ENCODE measurements at regions of chr19 and their contacts with region 1.

Region 1: DNA sequence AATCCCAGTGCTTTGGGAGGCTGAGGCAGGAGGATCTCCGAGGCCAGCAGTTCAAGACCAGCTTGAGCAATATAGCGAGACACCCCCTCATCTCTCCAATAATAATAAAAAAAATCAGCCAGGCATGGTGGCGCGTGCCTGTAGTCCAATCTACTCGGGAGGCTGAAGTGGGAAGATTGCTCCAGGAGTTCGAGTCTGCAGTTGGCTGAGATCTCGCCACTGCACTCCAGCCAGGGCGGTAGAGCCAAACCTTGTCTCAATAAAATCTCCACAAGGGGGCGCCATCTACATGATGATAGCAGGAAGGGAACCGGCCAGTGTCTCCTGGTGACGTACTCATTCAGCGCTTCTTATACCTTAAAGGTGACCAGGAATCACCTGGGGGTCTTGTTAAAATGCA is 13.6 kb upstream of the C5AR1 start:
- DNase-seq: no peak
- ATAC-seq: peak; percentile 97
- H3K4me3 ChIP-seq: no peak overlapping the region
- H3K27ac ChIP-seq: no peak overlapping the region
- H3K4me1 ChIP-seq: no peaks in the 10 kb centered on the region
- H3K27me3 ChIP-seq: no peaks in the 10 kb centered on the region
- CTCF ChIP-seq: peak; percentile 79

Region 2: GRCh38 chr19:47057328-47057727 is 238.7 kb before region 1 on chr19:
- intact Hi-C with region 1: no loop called
- DNase-seq: no peak
- ATAC-seq: no peak
- H3K4me3 ChIP-seq: no peak overlapping the region
- H3K27ac ChIP-seq: no peak overlapping the region
- H3K4me1 ChIP-seq: no peaks in the 10 kb centered on the region
- H3K27me3 ChIP-seq: no peaks in the 10 kb centered on the region
- CTCF ChIP-seq: no peak

Region 3: DNA sequence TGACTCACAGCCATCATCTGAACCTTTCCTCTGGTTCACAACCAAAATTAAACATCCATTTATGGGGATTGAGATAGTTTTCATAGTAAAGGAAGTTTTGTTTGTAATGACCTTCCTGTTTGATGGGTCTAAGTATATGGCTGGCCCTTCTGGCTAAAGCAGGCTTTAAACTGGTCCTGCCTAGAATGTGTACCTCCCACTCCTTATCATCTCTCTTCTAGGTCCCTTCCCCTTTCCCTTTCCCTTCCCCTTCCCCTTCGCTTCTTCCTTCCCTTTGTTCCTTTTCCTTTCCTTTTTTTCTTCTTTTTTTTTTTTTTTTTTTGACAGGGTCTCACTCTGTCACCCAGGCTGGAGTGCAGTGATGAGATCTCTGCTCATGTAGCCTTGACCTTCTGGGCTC is 100.6 kb before region 1 on chr19:
- intact Hi-C with region 1: no loop called
- DNase-seq: no peak
- ATAC-seq: no peak
- H3K4me3 ChIP-seq: no peak overlapping the region
- H3K27ac ChIP-seq: no peak overlapping the region
- H3K4me1 ChIP-seq: peaks cover 11% of the 10 kb centered on the region
- H3K27me3 ChIP-seq: no peaks in the 10 kb centered on the region
- CTCF ChIP-seq: no peak

Region 4: GRCh38 chr19:47256688-47257443 is 39.2 kb before region 1 on chr19:
- intact Hi-C with region 1: no loop called
- DNase-seq: peak; percentile 100
- ATAC-seq: peak; percentile 87
- H3K4me3 ChIP-seq: peak overlapping the region; percentile 51
- H3K27ac ChIP-seq: peak overlapping the region; percentile 87
- H3K4me1 ChIP-seq: peaks cover 19% of the 10 kb centered on the region
- H3K27me3 ChIP-seq: no peaks in the 10 kb centered on the region
- CTCF ChIP-seq: no peak

Region 5: GRCh38 chr19:47348819-47349795 is 53.1 kb after region 1 on chr19 and contains the start of gene DHX34:
- intact Hi-C with region 1: loop called (anchors 2 kb)
- DNase-seq: peak; percentile 99
- ATAC-seq: peak; percentile 100
- H3K4me3 ChIP-seq: peak within 1 kb of the TSS; percentile 99
- H3K27ac ChIP-seq: peak within 1 kb of the TSS; percentile 78
- H3K4me1 ChIP-seq: peaks cover 10% of the 10 kb centered on the region
- H3K27me3 ChIP-seq: no peaks in the 10 kb centered on the region
- CTCF ChIP-seq: peak; percentile 98
- total RNA-seq, gene DHX34: 15.8 TPM

Region 6: DNA sequence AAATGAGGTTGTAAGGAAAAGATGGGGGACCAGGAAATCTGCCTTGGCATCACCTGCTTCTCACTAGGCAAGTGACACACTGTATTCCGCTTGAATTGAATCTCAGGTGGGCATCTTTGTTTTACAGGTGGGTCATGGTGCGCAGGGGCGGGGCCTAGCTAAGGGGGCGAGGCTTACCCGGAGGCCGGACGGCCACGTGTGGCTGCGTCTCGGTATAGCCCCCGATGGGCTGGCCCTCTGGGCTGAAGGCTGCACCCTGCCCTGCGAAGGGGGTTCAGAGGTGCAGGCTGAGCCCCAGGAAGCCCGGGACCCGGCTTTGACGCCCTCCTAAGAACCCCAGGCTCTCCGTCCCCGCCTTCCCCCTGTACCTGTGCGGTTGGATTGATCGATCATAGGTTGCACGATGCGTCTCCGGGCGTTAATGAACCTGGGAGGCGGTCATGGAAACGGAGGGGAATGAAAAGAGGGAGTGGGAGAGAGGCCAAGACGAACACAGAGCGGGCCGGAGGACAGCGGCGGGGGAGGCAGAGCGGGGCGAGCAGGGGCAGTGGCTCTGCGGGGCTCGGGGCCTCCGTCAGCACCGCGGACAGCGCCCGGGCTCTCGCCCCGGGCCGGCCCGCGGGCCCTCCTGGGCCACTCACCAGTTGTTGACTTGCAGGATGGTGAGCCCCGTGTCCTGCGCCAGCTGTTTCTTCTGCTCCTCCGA is 110.8 kb after region 1 on chr19:
- intact Hi-C with region 1: loop called (anchors 10 kb)
- DNase-seq: no peak
- ATAC-seq: peak; percentile 58
- H3K4me3 ChIP-seq: no peak overlapping the region
- H3K27ac ChIP-seq: no peak overlapping the region
- H3K4me1 ChIP-seq: no peaks in the 10 kb centered on the region
- H3K27me3 ChIP-seq: peaks cover 11% of the 10 kb centered on the region
- CTCF ChIP-seq: no peak

Measured in upper lobe of right lung (tissue), 1 donor.